ENCODE measurements at regions of chr22 and their contacts with region 1.

Region 1: GRCh38 chr22:17501679-17502285 is 61.5 kb upstream of the SLC25A18 start:
- DNase-seq: peak; percentile 79
- H3K4me3 ChIP-seq: no peak overlapping the region
- H3K27ac ChIP-seq: no peak overlapping the region
- H3K4me1 ChIP-seq: no peaks in the 10 kb centered on the region
- H3K27me3 ChIP-seq: peaks cover 0 to 2% of the 10 kb centered on the region in 2 experiments
- CTCF ChIP-seq: peak; percentile 43 to 46
- POLR2A ChIP-seq: no peak

Region 2: GRCh38 chr22:17057959-17058814 is 443.6 kb before region 1 on chr22:
- CTCF ChIA-PET with region 1: interaction called, 29 read pairs
- POLR2A ChIA-PET with region 1: no interaction called
- dilution Hi-C with region 1: no loop called
- intact Hi-C with region 1: no loop called
- DNase-seq: peak; percentile 75
- H3K4me3 ChIP-seq: no peak overlapping the region
- H3K27ac ChIP-seq: no peak overlapping the region
- H3K4me1 ChIP-seq: peaks cover 6% of the 10 kb centered on the region
- H3K27me3 ChIP-seq: peaks cover 0 to 9% of the 10 kb centered on the region in 2 experiments
- CTCF ChIP-seq: peak; percentile 90 to 92
- POLR2A ChIP-seq: no peak

Region 3: GRCh38 chr22:17121227-17122195 is 380.3 kb before region 1 on chr22 and contains the start of gene TMEM121B:
- CTCF ChIA-PET with region 1: interaction called, 18 read pairs
- POLR2A ChIA-PET with region 1: no interaction called
- dilution Hi-C with region 1: no loop called
- intact Hi-C with region 1: loop called (anchors 1 kb)
- DNase-seq: peak; percentile 23
- H3K4me3 ChIP-seq: peak within 1 kb of the TSS; percentile 16 to 36 (median 33)
- H3K27ac ChIP-seq: no peak within 1 kb of the TSS
- H3K4me1 ChIP-seq: peaks cover 6% of the 10 kb centered on the region
- H3K27me3 ChIP-seq: peaks cover 22 to 25% of the 10 kb centered on the region in 2 experiments
- CTCF ChIP-seq: no peak
- POLR2A ChIP-seq: no peak
- total RNA-seq, gene TMEM121B: 0.33 and 0.37 TPM in 2 replicates

Region 4: GRCh38 chr22:17171313-17172171 is 330.2 kb before region 1 on chr22:
- CTCF ChIA-PET with region 1: interaction called, 215 read pairs
- POLR2A ChIA-PET with region 1: interaction called, 4 read pairs
- dilution Hi-C with region 1: no loop called
- intact Hi-C with region 1: loop called (anchors 1 kb)
- DNase-seq: peak; percentile 89
- H3K4me3 ChIP-seq: peak overlapping the region; percentile 13 to 53 (median 46)
- H3K27ac ChIP-seq: peak overlapping the region; percentile 84
- H3K4me1 ChIP-seq: peaks cover 2% of the 10 kb centered on the region
- H3K27me3 ChIP-seq: no peaks in the 10 kb centered on the region
- CTCF ChIP-seq: peak; percentile 68 to 95
- POLR2A ChIP-seq: no peak

Region 5: DNA sequence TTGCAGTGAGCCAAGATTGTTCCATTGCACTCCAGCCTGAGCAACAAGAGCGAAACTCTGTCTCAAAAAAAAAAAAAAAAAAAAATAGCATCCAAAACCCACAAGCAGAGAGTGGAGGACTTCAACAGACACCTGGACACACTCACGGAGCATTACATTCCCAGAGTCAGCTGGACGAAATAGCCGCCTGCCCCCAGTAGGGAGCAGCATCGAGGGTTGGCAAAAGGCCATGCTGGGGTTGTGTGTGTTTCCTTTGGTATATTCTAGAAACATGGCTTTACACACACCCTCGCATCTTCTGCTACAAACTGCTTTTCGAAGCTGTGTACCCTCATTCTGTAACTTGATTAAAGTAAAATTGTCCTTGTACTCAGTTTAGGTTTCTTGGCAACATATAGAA is 287.8 kb before region 1 on chr22:
- CTCF ChIA-PET with region 1: interaction called, 61 read pairs
- POLR2A ChIA-PET with region 1: no interaction called
- dilution Hi-C with region 1: no loop called
- intact Hi-C with region 1: loop called (anchors 1 kb)
- DNase-seq: peak; percentile 40
- H3K4me3 ChIP-seq: no peak overlapping the region
- H3K27ac ChIP-seq: no peak overlapping the region
- H3K4me1 ChIP-seq: peaks cover 3% of the 10 kb centered on the region
- H3K27me3 ChIP-seq: no peaks in the 10 kb centered on the region
- CTCF ChIP-seq: peak; percentile 39 to 52
- POLR2A ChIP-seq: no peak

Measured in endothelial cell of umbilical vein (primary cell).